ENCODE measurements at regions of chr19 and their contacts with region 1.

Region 1: DNA sequence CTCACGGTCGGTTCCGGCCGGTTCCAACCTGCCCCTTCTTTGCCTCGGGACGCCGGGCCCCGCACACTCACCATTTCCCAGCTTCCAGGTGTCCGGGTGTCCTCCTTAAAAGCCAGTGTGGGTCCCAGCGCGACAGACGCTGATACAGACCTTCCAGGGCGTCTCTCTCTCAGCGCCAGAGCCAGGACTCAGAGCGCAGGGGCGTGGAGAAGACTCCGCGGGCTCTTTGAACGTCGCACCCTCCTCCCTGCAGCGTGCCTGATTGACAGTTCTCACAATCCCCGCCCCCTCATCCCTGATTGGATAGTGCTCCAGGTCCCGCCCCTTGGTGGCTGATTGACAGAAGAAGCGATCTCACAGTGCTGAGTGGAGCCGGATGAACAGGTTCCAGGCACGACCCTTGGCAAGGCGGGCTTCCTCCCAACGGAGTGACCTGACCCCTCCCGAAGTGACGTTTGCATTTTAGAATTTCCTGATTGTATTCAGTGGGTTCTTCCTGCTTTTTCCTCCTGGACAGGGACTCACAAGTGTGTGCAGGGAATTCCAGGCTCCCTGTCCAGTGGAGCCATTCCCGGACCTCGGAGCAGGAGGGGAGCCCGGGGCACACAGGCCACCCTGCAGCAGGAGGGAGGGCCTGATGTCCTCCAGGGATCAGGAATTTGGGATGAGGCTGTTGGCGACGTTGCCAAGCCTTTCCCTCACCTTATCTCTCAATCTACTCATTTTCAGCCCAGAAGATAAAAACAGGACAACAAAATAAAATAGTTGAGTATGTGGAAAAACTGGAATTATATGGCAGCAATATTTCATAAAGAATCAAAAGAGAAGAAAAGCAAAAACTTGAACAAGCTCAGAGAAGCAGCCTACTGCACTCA is at the start of gene ZNF823:
- DNase-seq: peak; percentile 94 to 99 (median 95)
- ATAC-seq: peak; percentile 98
- H3K4me3 ChIP-seq: peak within 1 kb of the TSS; percentile 69
- H3K27ac ChIP-seq: peak within 1 kb of the TSS; percentile 78
- H3K4me1 ChIP-seq: peaks cover 15 to 30% of the 10 kb centered on the region in 2 experiments
- H3K27me3 ChIP-seq: no peaks in the 10 kb centered on the region
- CTCF ChIP-seq: no peak
- EP300 ChIP-seq: no peak
- POLR2A ChIP-seq: peak; percentile 78
- RAD21 ChIP-seq: no peak
- polyA plus RNA-seq, gene ZNF823: 5.4 to 11.6 TPM

Region 2: DNA sequence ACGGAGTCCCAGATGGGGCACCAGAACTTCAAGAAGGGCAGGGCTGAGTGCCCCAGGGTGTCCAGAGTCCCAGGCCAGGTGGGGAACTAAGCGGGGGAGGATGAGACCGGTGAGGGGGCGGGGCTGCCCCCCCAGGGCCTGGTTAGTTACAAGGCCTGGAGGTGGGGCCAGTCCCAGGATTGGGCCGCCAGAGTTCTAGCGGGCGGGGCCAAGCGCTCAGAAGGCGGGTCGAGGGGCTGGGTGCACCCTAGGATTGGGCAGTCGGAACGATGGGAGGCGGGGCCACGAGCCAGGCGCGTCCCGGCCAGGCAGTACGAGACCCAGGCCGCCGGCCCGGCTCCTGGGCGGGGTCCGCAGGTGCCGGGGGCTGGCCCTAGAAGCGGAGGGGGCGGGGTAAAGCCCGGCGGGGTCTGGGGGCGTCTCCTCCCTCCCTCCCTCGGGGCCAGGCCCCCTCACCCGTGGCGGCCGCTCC is 233.9 kb before region 1 on chr19:
- CTCF ChIA-PET with region 1: no interaction called
- POLR2A ChIA-PET with region 1: no interaction called
- in situ Hi-C with region 1: no loop called
- intact Hi-C with region 1: no loop called
- DNase-seq: peak; percentile 98
- ATAC-seq: peak; percentile 98
- H3K4me3 ChIP-seq: peak overlapping the region; percentile 77
- H3K27ac ChIP-seq: peak overlapping the region; percentile 84
- H3K4me1 ChIP-seq: peaks cover 12 to 39% of the 10 kb centered on the region in 2 experiments
- H3K27me3 ChIP-seq: no peaks in the 10 kb centered on the region
- CTCF ChIP-seq: no peak
- EP300 ChIP-seq: no peak
- POLR2A ChIP-seq: no peak
- RAD21 ChIP-seq: no peak

Region 3: GRCh38 chr19:11699931-11700794 is 38.8 kb before region 1 on chr19:
- CTCF ChIA-PET with region 1: no interaction called
- POLR2A ChIA-PET with region 1: interaction called, 12 read pairs
- in situ Hi-C with region 1: no loop called
- intact Hi-C with region 1: no loop called
- DNase-seq: peak; percentile 29 to 59 (median 35)
- ATAC-seq: peak; percentile 83
- H3K4me3 ChIP-seq: no peak overlapping the region
- H3K27ac ChIP-seq: no peak overlapping the region
- H3K4me1 ChIP-seq: peaks cover 0 to 1% of the 10 kb centered on the region in 2 experiments; a peak in 3 of 5 replicates
- H3K27me3 ChIP-seq: peaks cover 0 to 8% of the 10 kb centered on the region in 2 experiments; a peak in 2 of 5 replicates
- CTCF ChIP-seq: peak; percentile 57 to 77 (median 74)
- EP300 ChIP-seq: no peak
- POLR2A ChIP-seq: no peak
- RAD21 ChIP-seq: peak in 1 of 2 experiments; percentile 70; a peak in 2 of 4 replicates

Region 4: DNA sequence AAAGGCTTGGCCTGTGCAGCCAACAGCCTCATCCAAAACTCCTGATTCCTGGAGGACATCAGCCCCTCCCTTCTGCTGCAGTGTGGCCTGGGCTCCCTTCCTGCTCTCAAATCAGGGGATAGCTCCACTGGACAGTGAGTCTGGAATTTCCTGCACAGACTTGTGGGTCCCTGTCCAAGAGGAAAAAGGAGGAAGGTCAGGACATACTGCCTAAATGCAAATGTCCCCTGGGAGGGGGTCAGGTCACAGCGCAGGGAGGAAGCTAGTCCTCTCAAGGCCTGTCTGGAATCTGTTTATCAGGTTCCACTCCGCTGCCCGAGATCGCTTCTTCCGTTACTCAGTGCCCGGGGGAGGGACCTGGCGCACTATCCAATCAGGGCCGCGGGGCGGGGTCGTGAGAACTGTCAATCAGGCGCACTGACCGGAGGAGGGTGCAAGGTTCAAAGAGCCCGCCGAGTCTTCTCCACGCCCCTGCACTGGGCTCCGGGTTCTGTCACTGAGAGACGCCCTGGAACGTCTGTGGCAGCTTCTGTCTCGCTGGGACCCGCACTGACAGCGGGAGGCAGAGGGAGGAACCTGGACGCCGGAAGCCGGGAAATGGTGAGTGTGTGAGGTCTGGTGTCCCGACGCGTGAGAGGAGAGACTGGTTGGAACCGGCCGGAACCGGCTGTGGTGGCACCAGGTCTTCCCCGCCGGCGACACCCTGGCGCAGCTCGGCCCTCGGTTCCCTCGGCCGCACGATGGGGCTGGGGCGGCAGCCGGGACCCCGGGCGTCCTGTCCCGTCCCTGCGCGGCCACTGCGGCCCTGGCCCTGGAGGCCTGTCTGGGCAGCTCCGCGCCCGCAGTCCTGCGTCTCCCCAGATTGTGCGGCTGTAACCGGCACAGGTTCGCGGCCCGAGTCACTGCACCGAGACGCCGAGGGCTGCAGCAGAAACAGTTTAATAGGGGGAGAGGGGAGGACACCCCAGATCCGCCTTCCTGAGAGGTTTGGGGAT is 27.9 kb after region 1 on chr19 and contains the start of gene ZNF441:
- CTCF ChIA-PET with region 1: no interaction called
- POLR2A ChIA-PET with region 1: interaction called, 5 read pairs
- in situ Hi-C with region 1: no loop called
- intact Hi-C with region 1: loop called (anchors 2 kb)
- DNase-seq: peak; percentile 96 to 98 (median 96)
- ATAC-seq: peak; percentile 99
- H3K4me3 ChIP-seq: peak within 1 kb of the TSS; percentile 96
- H3K27ac ChIP-seq: peak within 1 kb of the TSS; percentile 88
- H3K4me1 ChIP-seq: peaks cover 7 to 18% of the 10 kb centered on the region in 2 experiments
- H3K27me3 ChIP-seq: no peaks in the 10 kb centered on the region
- CTCF ChIP-seq: no peak
- EP300 ChIP-seq: 0 out of 2 replicates have a peak, but pooled peaks have one; percentile 26
- POLR2A ChIP-seq: peak; percentile 88
- RAD21 ChIP-seq: no peak
- polyA plus RNA-seq, gene ZNF441: 1.9 to 3.3 TPM